ENCODE measurements at regions of chr3 and their contacts with region 1.

Region 1: DNA sequence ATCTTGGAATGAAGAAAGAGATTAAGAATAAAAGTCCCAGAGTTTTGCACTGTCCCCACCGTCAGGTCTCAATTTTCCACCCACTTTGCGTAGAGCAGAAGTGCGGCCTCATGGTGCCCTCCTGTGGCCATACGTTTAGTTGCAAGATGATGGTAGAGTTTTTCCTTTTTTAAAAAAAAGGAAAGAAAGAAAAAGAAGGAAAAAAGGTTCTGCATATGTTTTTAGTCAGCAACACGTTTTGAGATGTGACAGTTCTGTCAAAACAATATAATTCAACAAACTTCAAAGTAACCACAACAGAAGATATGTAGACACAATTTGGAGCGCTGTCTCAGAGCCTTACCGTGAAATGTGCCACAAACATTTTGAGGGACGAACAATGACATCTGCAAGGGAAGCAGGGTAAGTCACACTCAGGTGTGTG is 24.6 kb downstream of the EBLN2 start:
- DNase-seq: peak; percentile 47
- H3K4me3 ChIP-seq: no peak overlapping the region
- H3K27ac ChIP-seq: no peak overlapping the region
- H3K4me1 ChIP-seq: no peaks in the 10 kb centered on the region
- H3K27me3 ChIP-seq: no peaks in the 10 kb centered on the region
- CTCF ChIP-seq: peak; percentile 64

Region 2: DNA sequence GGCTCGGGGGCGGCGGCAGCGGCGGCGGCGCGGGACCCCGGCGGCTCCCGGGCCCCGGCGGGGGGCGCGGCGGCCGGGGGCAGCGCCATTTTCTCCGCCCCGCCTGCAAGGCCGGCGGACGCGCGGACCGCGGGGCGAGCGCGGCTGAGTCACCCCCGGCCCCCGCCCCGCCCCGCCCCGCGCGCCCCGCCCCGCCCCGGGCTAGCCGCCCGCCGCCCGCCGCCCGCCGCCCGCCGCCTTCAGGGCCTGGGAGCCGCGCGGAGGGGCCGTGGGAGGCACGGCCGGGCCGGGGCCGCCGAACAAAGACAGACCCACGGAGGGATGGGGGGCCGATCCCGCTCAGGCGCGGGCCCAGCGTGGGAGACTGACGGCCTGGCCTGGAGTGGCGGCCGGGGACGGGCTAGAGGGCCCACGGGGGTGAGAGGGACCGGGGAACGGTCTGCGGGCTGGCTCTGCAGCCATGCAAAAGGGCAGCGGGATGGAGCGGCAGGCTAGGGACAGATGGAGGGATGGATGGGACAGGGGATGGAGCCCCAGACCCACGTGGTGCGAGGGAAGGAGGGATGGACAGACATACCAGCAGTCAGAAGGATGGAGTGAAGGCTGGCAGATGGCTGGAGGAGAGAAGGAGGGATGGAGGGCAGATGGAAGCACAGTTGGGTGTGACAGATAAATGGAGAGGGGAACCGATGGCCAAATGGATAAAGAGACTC is 1360.6 kb before region 1 on chr3 and contains the start of gene EIF4E3:
- CTCF ChIA-PET with region 1: no interaction called
- POLR2A ChIA-PET with region 1: no interaction called
- intact Hi-C with region 1: loop called (anchors 10 kb)
- DNase-seq: no peak
- H3K4me3 ChIP-seq: peak within 1 kb of the TSS; percentile 54
- H3K27ac ChIP-seq: no peak within 1 kb of the TSS
- H3K4me1 ChIP-seq: no peaks in the 10 kb centered on the region
- H3K27me3 ChIP-seq: no peaks in the 10 kb centered on the region
- CTCF ChIP-seq: no peak
- total RNA-seq, gene EIF4E3: 3.1 and 4.6 TPM in 2 replicates

Region 3: DNA sequence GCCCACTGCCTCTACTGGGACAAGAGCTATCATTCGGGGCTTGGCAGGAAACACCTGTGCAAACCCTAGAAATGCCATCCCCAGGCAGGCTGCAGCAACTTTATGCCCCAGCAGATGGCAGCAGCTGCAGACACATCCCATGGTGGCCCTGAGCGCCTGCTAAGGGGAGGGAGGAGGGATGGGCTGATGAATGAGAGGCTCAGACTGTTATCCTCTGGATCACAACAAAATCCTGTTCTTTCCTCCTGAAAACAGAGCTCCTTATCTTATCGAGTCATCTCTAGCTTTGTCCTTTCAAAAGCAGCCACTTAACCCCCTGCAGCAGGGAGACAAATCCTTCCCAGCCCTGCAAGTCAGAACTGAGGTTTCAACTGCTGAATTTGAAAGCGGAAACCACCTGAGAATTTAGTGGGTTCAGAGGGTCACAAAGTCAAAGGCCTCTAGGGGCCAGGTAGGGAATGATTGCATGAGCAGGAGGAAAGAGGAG is 1210.6 kb before region 1 on chr3:
- CTCF ChIA-PET with region 1: no interaction called
- POLR2A ChIA-PET with region 1: no interaction called
- intact Hi-C with region 1: loop called (anchors 10 kb)
- DNase-seq: peak; percentile 70
- H3K4me3 ChIP-seq: no peak overlapping the region
- H3K27ac ChIP-seq: no peak overlapping the region
- H3K4me1 ChIP-seq: no peaks in the 10 kb centered on the region
- H3K27me3 ChIP-seq: no peaks in the 10 kb centered on the region
- CTCF ChIP-seq: peak; percentile 72

Region 4: GRCh38 chr3:72938471-72939265 is 147.4 kb before region 1 on chr3:
- CTCF ChIA-PET with region 1: no interaction called
- POLR2A ChIA-PET with region 1: no interaction called
- intact Hi-C with region 1: loop called (anchors 5 kb)
- DNase-seq: peak; percentile 62
- H3K4me3 ChIP-seq: no peak overlapping the region
- H3K27ac ChIP-seq: no peak overlapping the region
- H3K4me1 ChIP-seq: peaks cover 7% of the 10 kb centered on the region
- H3K27me3 ChIP-seq: no peaks in the 10 kb centered on the region
- CTCF ChIP-seq: peak; percentile 51